K562 (cell line): ENCODE measurements at regions of chr2 and their contacts with region 1.

Region 1: GRCh38 chr2:238139196-238140039 is 950 bp downstream of the KLHL30 start:
- DNase-seq: peak; percentile 63 to 82 (median 78)
- ATAC-seq: peak; percentile 86
- H3K4me3 ChIP-seq: no peak overlapping the region
- H3K27ac ChIP-seq: no peak overlapping the region
- H3K4me1 ChIP-seq: peaks cover 6 to 56% of the 10 kb centered on the region in 2 experiments; a peak in 4 of 5 replicates
- H3K27me3 ChIP-seq: peaks cover 0 to 5% of the 10 kb centered on the region in 2 experiments; a peak in 2 of 5 replicates
- CTCF ChIP-seq: peak; percentile 68 to 86 (median 80)
- EP300 ChIP-seq: no peak
- POLR2A ChIP-seq: no peak
- RAD21 ChIP-seq: peak; percentile 24 to 56; a peak in 3 of 4 replicates

Region 2: GRCh38 chr2:237858294-237859081 is 280.9 kb before region 1 on chr2:
- CTCF ChIA-PET with region 1: interaction called, 3 read pairs
- POLR2A ChIA-PET with region 1: no interaction called
- in situ Hi-C with region 1: no loop called
- intact Hi-C with region 1: loop called (anchors 10 kb)
- DNase-seq: peak; percentile 37 to 62 (median 48)
- ATAC-seq: peak; percentile 98
- H3K4me3 ChIP-seq: no peak overlapping the region
- H3K27ac ChIP-seq: no peak overlapping the region
- H3K4me1 ChIP-seq: peaks cover 0 to 8% of the 10 kb centered on the region in 2 experiments; a peak in 1 of 5 replicates
- H3K27me3 ChIP-seq: peaks cover 10 to 47% of the 10 kb centered on the region in 2 experiments; a peak in 4 of 5 replicates
- CTCF ChIP-seq: peak; percentile 64 to 78 (median 67)
- EP300 ChIP-seq: no peak
- POLR2A ChIP-seq: no peak
- RAD21 ChIP-seq: peak; percentile 83 to 88

Region 3: DNA sequence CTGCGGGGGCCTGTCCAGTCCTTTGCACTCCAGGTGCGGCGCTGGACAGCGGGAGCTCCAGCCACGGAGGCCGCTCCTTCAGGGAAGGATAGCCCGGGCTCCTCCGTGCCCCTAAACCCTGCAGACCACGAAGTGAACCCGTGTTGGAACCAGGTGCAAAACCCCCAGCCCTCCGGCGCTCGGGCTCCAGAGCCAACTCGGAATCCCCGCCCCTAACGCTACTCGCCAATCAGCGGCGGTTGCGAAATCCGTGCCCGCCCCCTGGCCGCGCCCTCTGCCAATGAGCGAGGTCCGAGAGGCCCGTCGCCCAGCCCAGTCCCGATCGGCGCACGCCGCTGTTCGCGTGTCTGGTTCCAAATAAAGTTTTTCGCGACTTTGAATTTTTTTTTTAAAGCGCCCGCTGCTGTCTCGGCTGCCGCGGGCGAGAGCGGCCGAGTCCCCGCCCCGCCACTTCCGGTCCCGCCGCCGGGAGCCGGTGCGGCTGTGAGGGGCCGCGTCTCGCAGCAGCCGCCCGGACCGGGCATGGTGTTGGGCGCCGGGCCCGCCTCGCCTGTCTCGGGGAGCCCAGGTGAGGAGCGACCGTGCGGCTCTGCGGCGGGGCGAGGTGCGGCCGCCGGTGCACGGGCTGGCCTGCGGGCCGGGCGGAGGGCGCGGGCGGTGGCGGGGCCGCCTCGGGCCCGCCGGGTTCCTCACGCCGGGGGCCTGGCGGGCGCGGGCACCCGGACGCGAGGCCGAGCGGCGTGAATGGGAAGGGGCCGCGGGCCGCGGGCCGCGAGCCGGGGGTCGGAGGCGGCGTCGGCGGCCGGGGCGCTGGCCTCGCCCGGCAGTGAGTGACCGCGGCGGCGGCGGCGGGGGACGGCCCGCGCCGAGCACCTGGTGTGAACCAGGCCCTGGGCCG is 172.6 kb before region 1 on chr2 and contains the start of gene UBE2F:
- CTCF ChIA-PET with region 1: no interaction called
- POLR2A ChIA-PET with region 1: no interaction called
- in situ Hi-C with region 1: no loop called
- intact Hi-C with region 1: no loop called
- DNase-seq: peak; percentile 81 to 95 (median 87)
- ATAC-seq: peak; percentile 91
- H3K4me3 ChIP-seq: peak within 1 kb of the TSS; percentile 79
- H3K27ac ChIP-seq: peak within 1 kb of the TSS; percentile 98
- H3K4me1 ChIP-seq: peaks cover 37 to 41% of the 10 kb centered on the region in 2 experiments
- H3K27me3 ChIP-seq: no peaks in the 10 kb centered on the region
- CTCF ChIP-seq: no peak
- EP300 ChIP-seq: peak; percentile 26; the same call in 1 of the 2 replicates
- POLR2A ChIP-seq: peak; percentile 65
- RAD21 ChIP-seq: no peak
- polyA plus RNA-seq, gene UBE2F: 18.1 to 24.9 TPM